Prostate gland (tissue), 2 donors: ENCODE measurements at regions of chr17 and their contacts with region 1.

Region 1: DNA sequence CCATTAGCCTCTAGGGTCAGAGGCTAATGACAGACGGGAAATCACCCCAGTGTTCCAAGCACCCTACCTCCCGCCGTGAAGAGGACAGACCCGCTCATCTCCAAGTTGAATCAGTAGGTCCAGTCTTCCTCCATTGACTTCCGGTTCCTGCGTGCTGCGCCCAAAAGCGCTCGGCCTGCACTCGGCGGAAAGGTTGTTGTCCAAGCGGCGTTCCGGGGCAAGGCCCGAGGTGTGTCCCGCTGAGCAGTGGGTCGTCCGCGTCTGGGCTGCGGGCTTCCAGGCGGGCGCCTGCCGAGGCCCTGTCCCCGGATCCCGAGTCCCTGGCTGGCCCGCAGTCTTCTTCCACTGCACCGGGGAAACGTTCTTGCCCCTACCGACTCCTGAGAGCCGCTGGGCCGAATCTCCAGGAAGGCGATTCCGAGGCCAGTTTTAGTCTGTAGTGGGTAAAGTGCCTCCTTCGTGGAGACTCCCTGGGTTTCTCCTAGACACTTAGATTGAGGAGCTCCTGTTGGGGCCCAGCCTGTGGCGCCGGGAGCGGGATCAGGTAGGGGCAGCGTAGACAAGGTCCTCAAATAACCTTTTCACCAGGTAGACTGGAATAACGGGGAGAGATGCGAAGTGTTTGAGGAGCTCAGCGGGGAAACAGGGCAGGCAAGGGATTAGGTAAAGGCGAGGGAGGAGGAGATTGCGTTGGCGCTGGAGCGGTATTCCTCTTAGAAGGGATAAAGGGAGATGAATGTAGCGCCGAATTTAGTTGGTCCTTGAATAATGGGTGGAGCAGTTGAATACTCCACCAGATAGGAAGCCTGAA is at the start of gene TEFM:
- DNase-seq: peak; percentile 82
- H3K4me3 ChIP-seq: peak within 1 kb of the TSS; percentile 57 to 70
- H3K27ac ChIP-seq: peak within 1 kb of the TSS; percentile 90
- H3K4me1 ChIP-seq: no peaks in the 10 kb centered on the region
- H3K27me3 ChIP-seq: no peaks in the 10 kb centered on the region
- CTCF ChIP-seq: peak in 2 of 4 experiments; percentile 24
- POLR2A ChIP-seq: peak; percentile 34
- total RNA-seq, gene TEFM: 4.4 to 8.6 TPM

Region 2: GRCh38 chr17:30600049-30600829 is 306.1 kb before region 1 on chr17:
- intact Hi-C with region 1: loop called (anchors 5 kb)
- DNase-seq: peak; percentile 78
- H3K4me3 ChIP-seq: peak overlapping the region; percentile 84 to 90
- H3K27ac ChIP-seq: peak overlapping the region; percentile 98 to 99
- H3K4me1 ChIP-seq: no peaks in the 10 kb centered on the region
- H3K27me3 ChIP-seq: no peaks in the 10 kb centered on the region
- CTCF ChIP-seq: peak in 3 of 4 experiments; percentile 15 to 67 (median 30)
- POLR2A ChIP-seq: peak; percentile 83